ENCODE measurements at regions of chr2 and their contacts with region 1.

Region 1: DNA sequence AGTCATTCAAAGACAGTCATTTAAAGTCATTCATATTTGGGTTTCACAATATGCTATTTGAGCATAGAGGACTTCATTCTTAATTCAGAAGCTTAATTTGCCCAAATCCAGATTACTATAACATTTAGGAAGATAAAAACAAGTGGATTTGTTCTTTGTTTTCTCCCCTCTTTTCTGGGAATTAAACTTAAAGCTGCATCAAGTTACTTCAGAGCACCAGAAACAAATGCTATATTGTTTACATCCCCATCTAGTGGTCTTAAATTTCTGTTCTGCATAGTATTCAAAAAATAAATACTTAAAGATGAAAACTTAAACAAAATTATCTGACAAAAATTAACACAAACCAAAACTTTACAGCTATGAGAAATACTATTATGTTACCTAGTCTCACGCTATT is 34.7 kb upstream of the MARCHF7 start:
- DNase-seq: no peak
- ATAC-seq: no peak
- H3K4me3 ChIP-seq: no peak overlapping the region
- H3K27ac ChIP-seq: no peak overlapping the region
- H3K4me1 ChIP-seq: no peaks in the 10 kb centered on the region
- H3K27me3 ChIP-seq: no peaks in the 10 kb centered on the region
- CTCF ChIP-seq: peak in 1 of 3 experiments; percentile 61; a peak in 2 of 6 replicates
- EP300 ChIP-seq: no peak
- POLR2A ChIP-seq: no peak
- RAD21 ChIP-seq: peak; percentile 52 to 63

Region 2: GRCh38 chr2:159557451-159558034 is 120.1 kb before region 1 on chr2:
- CTCF ChIA-PET with region 1: no interaction called
- POLR2A ChIA-PET with region 1: no interaction called
- in situ Hi-C with region 1: no loop called
- intact Hi-C with region 1: loop called (anchors 5 kb)
- DNase-seq: peak in 1 of 4 experiments; percentile 39
- ATAC-seq: peak; percentile 85
- H3K4me3 ChIP-seq: no peak overlapping the region
- H3K27ac ChIP-seq: no peak overlapping the region
- H3K4me1 ChIP-seq: peaks cover 0 to 6% of the 10 kb centered on the region in 2 experiments; a peak in 1 of 5 replicates
- H3K27me3 ChIP-seq: no peaks in the 10 kb centered on the region
- CTCF ChIP-seq: peak; percentile 47 to 63 (median 56); a peak in 5 of 6 replicates
- EP300 ChIP-seq: no peak
- POLR2A ChIP-seq: no peak
- RAD21 ChIP-seq: peak; percentile 31 to 79

Region 3: DNA sequence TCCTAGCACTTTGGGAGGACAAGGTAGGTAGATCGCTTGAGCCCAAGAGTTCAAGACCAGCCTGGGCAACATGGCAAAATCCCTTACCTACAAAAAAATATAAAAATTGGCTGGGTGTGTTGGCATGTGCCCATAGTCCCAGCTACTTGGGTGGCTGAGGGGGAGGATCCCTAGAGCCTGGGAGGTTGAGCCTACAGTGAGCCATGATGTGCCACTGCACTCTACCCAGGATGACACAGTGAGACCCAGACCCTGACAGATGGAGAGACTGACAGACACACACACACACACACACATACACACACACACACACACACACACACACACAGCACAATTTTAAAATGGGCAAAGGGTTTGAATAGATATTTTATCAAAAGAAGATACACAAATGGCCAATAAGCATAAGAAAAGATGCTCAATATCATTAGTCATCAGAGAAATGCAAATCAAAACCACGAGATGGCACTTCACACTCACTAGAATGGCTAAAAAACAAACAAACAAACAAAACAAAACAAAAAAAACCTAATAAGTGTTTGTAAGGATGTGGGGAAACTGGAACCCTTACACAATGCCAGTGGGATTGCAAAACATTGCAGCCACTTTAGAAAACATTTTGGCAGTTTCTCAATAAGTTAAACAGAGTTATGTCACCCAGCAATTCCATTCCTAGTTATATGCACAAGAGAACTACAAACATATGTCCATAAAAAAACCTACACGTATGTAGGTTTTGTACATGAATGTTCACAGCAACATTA is 103.6 kb before region 1 on chr2:
- CTCF ChIA-PET with region 1: no interaction called
- POLR2A ChIA-PET with region 1: no interaction called
- in situ Hi-C with region 1: no loop called
- intact Hi-C with region 1: no loop called
- DNase-seq: no peak
- ATAC-seq: no peak
- H3K4me3 ChIP-seq: no peak overlapping the region
- H3K27ac ChIP-seq: no peak overlapping the region
- H3K4me1 ChIP-seq: no peaks in the 10 kb centered on the region
- H3K27me3 ChIP-seq: no peaks in the 10 kb centered on the region
- CTCF ChIP-seq: no peak
- EP300 ChIP-seq: no peak
- POLR2A ChIP-seq: no peak
- RAD21 ChIP-seq: no peak

Measured in K562 (cell line).